ENCODE measurements at regions of chr2 and their contacts with region 1.

Region 1: DNA sequence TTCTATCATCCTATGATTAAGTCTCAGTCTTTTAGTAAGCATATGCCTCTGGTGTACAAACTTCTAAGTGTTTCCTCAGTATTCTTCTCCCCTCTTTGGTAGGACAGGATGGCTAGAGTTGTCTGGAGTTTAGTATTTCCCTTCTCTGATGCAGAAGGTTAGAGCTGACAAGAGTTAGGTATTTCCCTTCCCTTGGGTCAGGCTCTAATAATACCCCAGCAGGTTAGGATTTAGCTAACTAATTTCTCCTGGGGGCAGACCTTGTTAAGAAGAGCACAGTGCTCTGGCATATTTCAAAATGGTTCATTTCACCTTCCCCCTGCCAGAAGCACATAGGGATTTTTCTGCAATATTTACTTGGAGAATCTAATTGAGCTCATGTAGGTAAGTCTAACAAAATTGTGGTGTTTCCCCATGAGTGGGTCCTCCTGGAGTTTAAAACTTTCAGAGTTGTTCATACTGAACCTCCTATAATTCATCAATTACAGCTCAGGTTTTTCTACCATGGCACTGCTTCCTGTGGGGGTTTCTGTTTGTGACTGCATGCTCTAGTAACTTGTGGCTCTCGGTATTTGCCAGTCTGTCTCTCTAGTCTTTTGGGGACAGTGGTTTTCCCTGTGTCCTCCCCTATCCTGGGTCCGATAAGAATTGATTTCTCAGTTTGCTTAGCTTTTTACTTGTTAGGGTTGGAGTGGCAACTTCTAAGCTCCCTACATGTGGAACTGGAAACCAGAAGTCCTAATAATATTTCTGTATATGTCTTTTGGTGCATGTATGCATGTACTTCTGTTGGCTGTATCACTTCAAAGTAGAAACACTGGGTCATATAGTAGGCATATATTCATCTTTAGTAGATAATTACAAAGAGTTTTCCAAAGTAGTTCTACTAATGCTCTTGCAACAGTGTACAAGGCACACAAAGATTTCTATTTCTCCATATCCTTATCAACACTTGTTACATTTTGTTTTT is 77.7 kb downstream of the GDF7 start:
- DNase-seq: no peak
- ATAC-seq: peak; percentile 58
- H3K4me3 Mint-ChIP-seq: peak overlapping the region; percentile 59
- H3K27ac Mint-ChIP-seq: peak overlapping the region; percentile 74
- H3K4me1 Mint-ChIP-seq: peaks cover 24% of the 10 kb centered on the region
- H3K27me3 Mint-ChIP-seq: no peaks in the 10 kb centered on the region
- CTCF ChIP-seq: no peak

Region 2: DNA sequence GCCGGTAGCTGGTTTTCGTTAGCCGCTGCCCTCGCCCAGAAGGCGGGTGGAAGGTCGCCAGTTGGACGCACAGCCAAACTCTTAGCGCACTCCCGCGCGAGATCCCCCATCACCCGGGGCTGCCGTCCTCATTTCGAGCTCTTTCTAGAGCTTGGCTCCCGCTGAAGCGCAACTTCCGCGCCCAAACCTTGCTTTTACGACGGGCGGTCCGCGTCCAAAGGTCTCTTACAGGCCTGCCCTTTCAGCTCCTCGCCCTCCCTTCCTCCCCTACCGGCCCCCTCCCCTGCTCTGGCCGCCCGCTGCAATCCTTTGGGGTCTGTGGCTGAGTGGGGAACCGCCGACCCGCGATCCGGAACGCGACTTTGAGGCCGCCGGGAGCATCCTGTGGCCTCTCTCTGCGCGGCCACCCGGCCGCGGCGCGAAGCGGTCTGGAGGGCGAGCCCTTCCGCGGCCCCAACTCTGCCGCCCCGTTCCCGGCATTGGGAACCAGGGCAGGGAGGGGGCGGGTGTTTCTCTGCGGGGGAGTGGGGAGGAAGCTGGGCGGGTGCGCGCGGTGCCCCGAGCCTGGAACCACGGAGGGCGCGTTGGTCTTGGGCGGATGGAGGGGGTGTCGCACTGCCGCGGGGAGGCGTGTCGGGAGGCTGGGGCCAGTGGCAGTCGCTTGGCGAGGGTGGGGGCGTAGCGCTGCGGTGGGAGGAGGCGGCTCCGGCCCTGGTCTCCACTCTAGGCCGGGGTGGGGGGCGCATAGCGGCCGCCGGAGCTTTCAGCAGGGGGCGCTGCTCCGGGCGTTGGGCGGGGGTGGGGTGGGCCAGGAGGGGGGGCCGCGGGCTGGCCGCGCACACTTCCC is 78.1 kb before region 1 on chr2 and contains the start of gene GDF7:
- CTCF ChIA-PET with region 1: no interaction called
- POLR2A ChIA-PET with region 1: interaction called, 5 read pairs
- intact Hi-C with region 1: loop called (anchors 2 kb)
- DNase-seq: peak; percentile 67
- ATAC-seq: peak; percentile 78
- H3K4me3 Mint-ChIP-seq: peak within 1 kb of the TSS; percentile 87
- H3K27ac Mint-ChIP-seq: peak within 1 kb of the TSS; percentile 82
- H3K4me1 Mint-ChIP-seq: peaks cover 32% of the 10 kb centered on the region
- H3K27me3 Mint-ChIP-seq: peaks cover 8% of the 10 kb centered on the region
- CTCF ChIP-seq: no peak
- total RNA-seq, gene GDF7: 5.9 and 6.7 TPM in 2 replicates